Aorta (tissue), 5 donors: ENCODE measurements at regions of chr2 and their contacts with region 1.

Region 1: GRCh38 chr2:73779467-73780236 is at the start of gene DUSP11:
- DNase-seq: peak; percentile 96 to 98
- ATAC-seq: peak; percentile 100
- H3K4me3 ChIP-seq: peak within 1 kb of the TSS; percentile 61 to 73
- H3K27ac ChIP-seq: peak within 1 kb of the TSS; percentile 1 to 98
- H3K4me1 ChIP-seq: peaks cover 0 to 2% of the 10 kb centered on the region in 2 donors
- H3K27me3 ChIP-seq: no peaks in the 10 kb centered on the region
- total RNA-seq, gene DUSP11: 22.1 to 27.6 TPM

Region 2: DNA sequence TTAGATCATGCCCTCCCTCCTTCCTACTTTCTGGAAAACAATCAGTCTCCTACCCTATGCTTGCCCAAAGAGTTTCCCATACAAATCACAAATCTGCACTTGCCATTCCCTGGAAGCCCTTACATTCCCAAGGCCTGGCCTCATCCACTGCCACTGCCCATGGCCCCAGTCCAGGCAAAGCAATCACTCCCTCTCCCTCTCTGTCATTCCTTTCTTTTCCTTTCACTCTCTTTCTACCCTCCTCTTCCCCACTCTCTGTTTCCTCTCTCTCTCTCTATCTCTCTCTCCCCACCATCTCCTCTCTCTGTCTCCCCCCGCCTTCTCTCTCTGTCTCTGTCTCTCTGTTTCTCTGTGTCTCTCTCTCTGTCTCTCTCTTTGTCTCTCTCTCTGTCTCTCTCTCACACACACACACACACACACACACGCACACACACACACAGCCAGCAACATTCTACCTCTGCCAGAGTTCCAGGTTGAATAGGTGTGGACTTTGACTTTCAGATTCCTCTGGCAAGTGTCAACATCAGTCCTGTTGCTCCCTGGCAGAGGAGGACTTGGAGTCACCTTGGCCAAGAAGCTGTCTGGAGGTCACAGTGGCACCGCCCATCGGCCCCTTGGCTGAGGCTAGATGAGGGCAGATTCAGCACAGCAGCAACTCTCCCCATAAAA is 93.7 kb before region 1 on chr2:
- intact Hi-C with region 1: loop called in 1 of 2 experiments (anchors 10 kb)
- DNase-seq: peak in 1 of 2 donors; percentile 54
- ATAC-seq: no peak
- H3K4me3 ChIP-seq: no peak overlapping the region
- H3K27ac ChIP-seq: no peak overlapping the region
- H3K4me1 ChIP-seq: no peaks in the 10 kb centered on the region
- H3K27me3 ChIP-seq: no peaks in the 10 kb centered on the region